ENCODE measurements at regions of chr5 and their contacts with region 1.

Region 1: DNA sequence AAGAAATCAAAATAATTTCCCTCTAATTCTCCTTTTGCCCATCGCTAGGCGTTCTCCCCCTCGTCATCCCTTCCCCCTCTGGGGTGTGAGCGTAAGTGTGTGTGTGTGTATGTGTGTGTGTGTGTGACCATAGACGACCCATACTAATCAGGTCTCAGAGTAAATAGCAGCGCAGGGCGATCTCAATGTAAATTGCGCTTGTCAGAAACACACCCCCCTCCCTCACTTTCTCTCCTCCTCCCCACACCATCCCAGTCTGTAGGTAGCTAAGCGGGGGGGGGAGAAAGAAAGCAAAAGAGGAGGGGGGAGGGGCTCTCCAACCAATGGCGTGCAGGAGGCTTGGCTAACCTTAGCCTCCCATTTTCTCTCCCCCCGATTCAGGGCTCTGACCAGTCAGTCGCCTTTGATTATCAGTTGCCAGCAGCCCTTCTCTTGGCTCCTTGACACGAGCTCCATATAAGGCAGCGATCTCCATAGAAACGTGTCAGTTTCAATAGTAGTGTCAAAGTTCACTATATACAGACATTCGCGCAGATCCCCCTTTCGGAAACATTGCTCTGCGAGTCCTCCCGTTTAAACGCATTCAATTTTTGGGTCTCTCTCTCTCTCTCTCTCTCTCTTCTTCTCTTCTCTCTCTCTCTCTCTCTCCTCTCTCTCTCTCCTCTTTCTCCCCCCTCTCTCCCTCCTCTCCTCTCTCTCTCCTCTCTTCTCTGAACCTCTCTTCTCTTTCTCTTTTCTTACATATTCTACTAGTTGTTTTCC is at the start of gene NR2F1:
- DNase-seq: no peak
- H3K4me3 ChIP-seq: no peak within 1 kb of the TSS
- H3K27ac ChIP-seq: no peak within 1 kb of the TSS
- H3K4me1 ChIP-seq: no peaks in the 10 kb centered on the region
- CTCF ChIP-seq: no peak
- total RNA-seq, gene NR2F1: not detected in 2 replicates

Region 2: DNA sequence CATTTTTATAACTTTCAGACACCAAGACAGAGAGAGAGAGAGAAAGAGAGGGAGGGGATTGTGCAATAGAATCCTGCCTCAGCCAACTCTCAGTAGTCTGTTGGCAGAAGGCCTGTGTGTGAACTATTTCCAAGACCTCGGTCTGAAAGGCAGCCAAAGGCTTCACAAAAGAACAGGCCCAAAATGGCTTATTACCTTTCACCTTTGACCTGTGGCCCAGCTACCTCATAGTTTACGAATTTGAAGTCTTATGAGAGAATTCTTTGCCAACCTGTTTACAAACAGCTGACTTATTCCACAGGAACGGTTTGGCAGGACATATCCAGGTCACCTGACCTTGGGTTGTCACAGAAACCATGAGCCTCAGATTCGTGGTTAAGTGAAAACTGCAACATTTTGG is 50.5 kb before region 1 on chr5:
- CTCF ChIA-PET with region 1: no interaction called
- POLR2A ChIA-PET with region 1: no interaction called
- intact Hi-C with region 1: no loop called
- DNase-seq: no peak
- H3K4me3 ChIP-seq: no peak overlapping the region
- H3K27ac ChIP-seq: no peak overlapping the region
- H3K4me1 ChIP-seq: no peaks in the 10 kb centered on the region
- CTCF ChIP-seq: no peak

Region 3: DNA sequence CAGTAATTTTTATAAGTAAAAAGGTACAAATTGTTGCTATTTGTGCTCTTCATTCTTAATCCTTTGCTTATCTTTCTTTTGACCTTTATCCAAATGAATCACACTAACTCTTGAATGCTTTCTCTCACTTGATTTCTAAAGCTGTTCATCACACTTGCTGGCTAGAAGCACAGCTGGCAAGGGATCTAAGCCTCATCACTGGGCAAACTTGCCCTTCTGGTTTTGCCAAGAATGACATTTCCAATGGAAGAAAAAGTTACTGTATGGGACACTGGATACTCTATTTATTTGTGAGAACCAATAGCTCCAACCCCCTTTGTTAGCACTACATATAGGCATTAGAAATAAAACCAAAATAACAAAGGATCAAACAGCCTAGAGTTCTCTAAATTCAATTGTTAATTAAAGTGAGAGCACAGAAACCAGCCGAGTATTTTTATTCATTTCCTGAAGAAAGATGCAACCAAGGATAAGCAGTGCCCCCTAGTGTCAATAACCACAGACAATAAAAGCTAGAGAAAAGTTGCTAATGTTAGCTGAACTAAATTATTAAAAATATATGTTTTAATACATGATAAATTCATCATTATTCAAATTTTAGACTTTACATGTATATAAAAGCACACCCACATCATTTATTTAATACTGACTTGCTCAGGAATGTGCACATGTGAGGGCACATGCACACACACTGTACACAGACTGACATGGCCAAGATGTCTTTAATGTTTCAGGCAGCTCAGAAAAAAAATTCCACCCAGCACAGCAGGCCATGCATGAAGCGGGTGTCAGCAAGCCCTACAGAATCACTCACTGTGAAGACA is 218.3 kb after region 1 on chr5:
- CTCF ChIA-PET with region 1: no interaction called
- POLR2A ChIA-PET with region 1: no interaction called
- intact Hi-C with region 1: loop called (anchors 2 kb)
- DNase-seq: peak; percentile 32
- H3K4me3 ChIP-seq: no peak overlapping the region
- H3K27ac ChIP-seq: no peak overlapping the region
- H3K4me1 ChIP-seq: no peaks in the 10 kb centered on the region
- CTCF ChIP-seq: peak; percentile 88

Region 4: DNA sequence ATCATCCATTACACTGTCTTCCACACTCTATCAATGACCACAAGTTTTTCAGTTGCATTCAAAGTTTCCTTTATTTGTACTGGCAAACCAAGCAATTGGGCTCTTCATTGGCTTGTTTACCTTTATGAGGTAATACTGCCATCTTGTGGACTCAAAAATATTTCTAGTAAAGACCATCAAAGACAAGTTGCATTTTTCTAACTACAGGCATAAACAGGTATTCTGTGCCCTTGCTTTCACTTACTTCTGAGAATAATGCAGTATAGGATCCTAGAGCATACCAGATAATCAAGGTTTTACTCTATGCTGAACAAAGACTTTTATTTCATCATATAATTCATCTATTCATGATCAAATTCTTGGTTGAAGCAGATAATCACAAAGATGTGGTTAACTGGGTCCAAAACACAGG is 332.3 kb after region 1 on chr5:
- CTCF ChIA-PET with region 1: no interaction called
- POLR2A ChIA-PET with region 1: no interaction called
- intact Hi-C with region 1: loop called (anchors 5 kb)
- DNase-seq: peak; percentile 60
- H3K4me3 ChIP-seq: no peak overlapping the region
- H3K27ac ChIP-seq: no peak overlapping the region
- H3K4me1 ChIP-seq: no peaks in the 10 kb centered on the region
- CTCF ChIP-seq: peak; percentile 85